PC-3 (cell line): ENCODE measurements at regions of chr15 and their contacts with region 1.

Region 1: DNA sequence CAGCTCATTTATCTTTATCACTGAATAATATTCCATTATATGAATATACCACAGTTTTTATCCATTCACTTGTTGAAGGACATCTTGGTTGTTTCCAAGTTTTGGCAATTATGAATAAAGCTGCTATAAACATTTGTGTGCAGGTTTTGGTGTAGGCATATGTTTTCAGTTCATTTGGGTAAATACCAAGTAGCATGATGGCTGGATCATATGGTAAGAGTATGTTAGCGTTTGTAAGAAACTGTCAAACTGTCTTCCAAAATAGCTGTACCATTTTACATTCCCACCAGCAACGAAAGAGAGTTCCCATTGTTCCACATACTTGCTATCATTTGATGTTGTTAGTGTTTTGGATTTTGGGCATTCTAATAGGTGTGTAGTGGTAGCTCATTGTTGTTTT is 72.0 kb upstream of the GOLGA8J start:
- DNase-seq: no peak
- ATAC-seq: no peak
- H3K4me3 ChIP-seq: no peak overlapping the region
- H3K27ac ChIP-seq: no peak overlapping the region
- H3K4me1 ChIP-seq: no peaks in the 10 kb centered on the region
- H3K27me3 ChIP-seq: peaks cover 16% of the 10 kb centered on the region; the same call in 1 of the 2 replicates
- CTCF ChIP-seq: no peak

Region 2: GRCh38 chr15:29962407-29962806 is 48.3 kb before region 1 on chr15:
- CTCF ChIA-PET with region 1: no interaction called
- POLR2A ChIA-PET with region 1: no interaction called
- intact Hi-C with region 1: loop called (anchors 5 kb)
- DNase-seq: no peak
- ATAC-seq: no peak
- H3K4me3 ChIP-seq: no peak overlapping the region
- H3K27ac ChIP-seq: no peak overlapping the region
- H3K4me1 ChIP-seq: no peaks in the 10 kb centered on the region
- H3K27me3 ChIP-seq: no peaks in the 10 kb centered on the region
- CTCF ChIP-seq: no peak

Region 3: DNA sequence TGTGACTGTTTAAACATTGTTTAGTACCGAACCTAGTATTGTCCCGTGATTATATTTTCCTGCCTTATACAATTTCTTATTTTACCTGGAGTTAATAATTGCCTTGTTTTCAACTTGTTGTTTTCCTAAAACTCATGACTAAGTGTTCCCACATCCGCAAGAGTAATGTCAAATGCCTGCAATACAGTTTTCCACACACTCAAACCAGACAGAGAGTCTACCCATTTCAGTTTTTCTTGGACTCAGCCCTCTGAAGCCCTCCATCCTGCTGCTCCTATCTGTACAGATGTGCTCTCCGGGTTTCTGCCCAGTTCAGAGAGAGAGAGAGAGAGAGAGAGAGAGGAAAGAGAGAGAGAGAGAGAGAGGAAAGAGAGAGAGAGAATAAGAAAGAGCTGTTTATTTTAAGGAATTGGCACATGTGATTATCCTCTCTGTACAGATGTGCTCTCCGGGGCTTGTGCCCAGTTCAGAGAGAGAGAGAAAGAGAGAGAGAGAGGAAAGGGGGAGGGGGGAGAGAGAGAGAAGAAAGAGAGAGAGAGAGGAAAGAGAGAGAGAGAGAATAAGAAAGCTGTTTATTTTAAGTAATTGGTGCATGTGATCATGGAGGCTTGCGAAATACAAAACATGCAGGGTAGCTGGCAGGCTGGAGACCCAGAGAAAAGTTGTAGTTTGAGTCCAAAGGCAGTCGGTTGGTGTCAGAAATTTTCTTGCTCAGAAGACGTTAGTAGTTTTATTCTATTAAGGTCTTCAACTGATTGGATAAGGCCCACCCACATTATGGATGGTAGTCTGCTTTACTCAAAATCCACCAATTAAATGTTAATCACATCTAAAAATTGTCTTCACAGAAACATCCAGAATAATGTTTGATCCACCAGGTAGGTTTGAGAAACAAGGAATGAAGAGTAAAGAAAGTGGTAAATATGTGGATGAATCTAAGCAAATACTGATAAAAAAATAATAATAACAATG is 32.0 kb before region 1 on chr15:
- CTCF ChIA-PET with region 1: no interaction called
- POLR2A ChIA-PET with region 1: no interaction called
- intact Hi-C with region 1: loop called (anchors 5 kb)
- DNase-seq: no peak
- ATAC-seq: no peak
- H3K4me3 ChIP-seq: no peak overlapping the region
- H3K27ac ChIP-seq: no peak overlapping the region
- H3K4me1 ChIP-seq: 0 out of 2 replicates have a peak, but pooled peaks cover 6% of the 10 kb centered on the region
- H3K27me3 ChIP-seq: no peaks in the 10 kb centered on the region
- CTCF ChIP-seq: no peak

Region 4: GRCh38 chr15:29990035-29990434 is 20.7 kb before region 1 on chr15:
- CTCF ChIA-PET with region 1: no interaction called
- POLR2A ChIA-PET with region 1: no interaction called
- intact Hi-C with region 1: no loop called
- DNase-seq: no peak
- ATAC-seq: no peak
- H3K4me3 ChIP-seq: no peak overlapping the region
- H3K27ac ChIP-seq: no peak overlapping the region
- H3K4me1 ChIP-seq: no peaks in the 10 kb centered on the region
- H3K27me3 ChIP-seq: 0 out of 2 replicates have a peak, but pooled peaks cover 4% of the 10 kb centered on the region
- CTCF ChIP-seq: no peak